ENCODE measurements at regions of chr12 and their contacts with region 1.

Region 1: GRCh38 chr12:7092229-7092985 is at the start of gene C1R:
- DNase-seq: peak; percentile 69 to 72
- ATAC-seq: peak; percentile 52 to 80
- H3K4me3 ChIP-seq: peak within 1 kb of the TSS; percentile 37
- H3K27ac ChIP-seq: peak within 1 kb of the TSS; percentile 85 to 91
- H3K4me1 ChIP-seq: peaks cover 20% of the 10 kb centered on the region; the same call in 2 of the 3 replicates
- CTCF ChIP-seq: peak; percentile 92
- EP300 ChIP-seq: no peak
- POLR2A ChIP-seq: no peak
- RAD21 ChIP-seq: peak; percentile 88 to 92
- polyA plus RNA-seq, gene C1R: 36.0 and 57.8 TPM in 2 replicates

Region 2: GRCh38 chr12:7060353-7060954 is 32.0 kb before region 1 on chr12 and contains the start of gene C1S:
- CTCF ChIA-PET with region 1: interaction called, 197 read pairs
- POLR2A ChIA-PET with region 1: interaction called, 19 read pairs
- DNase-seq: peak; percentile 93 to 95
- ATAC-seq: peak; percentile 99
- H3K4me3 ChIP-seq: peak within 1 kb of the TSS; percentile 15; the same call in 1 of the 3 replicates
- H3K27ac ChIP-seq: peak within 1 kb of the TSS; percentile 77 to 93
- H3K4me1 ChIP-seq: peaks cover 22% of the 10 kb centered on the region
- CTCF ChIP-seq: peak; percentile 96
- EP300 ChIP-seq: no peak
- POLR2A ChIP-seq: peak; percentile 30; the same call in 1 of the 2 replicates
- RAD21 ChIP-seq: peak; percentile 98 to 99
- polyA plus RNA-seq, gene C1S: 107 and 109 TPM in 2 replicates

Region 3: GRCh38 chr12:7068240-7068993 is 24.0 kb before region 1 on chr12:
- CTCF ChIA-PET with region 1: interaction called, 10 read pairs
- POLR2A ChIA-PET with region 1: interaction called, 3 read pairs
- DNase-seq: no peak
- ATAC-seq: peak in 1 of 2 experiments; percentile 20; a peak in 2 of 6 replicates
- H3K4me3 ChIP-seq: no peak overlapping the region
- H3K27ac ChIP-seq: no peak overlapping the region
- H3K4me1 ChIP-seq: no peaks in the 10 kb centered on the region
- CTCF ChIP-seq: no peak
- EP300 ChIP-seq: no peak
- POLR2A ChIP-seq: no peak
- RAD21 ChIP-seq: no peak

Region 4: DNA sequence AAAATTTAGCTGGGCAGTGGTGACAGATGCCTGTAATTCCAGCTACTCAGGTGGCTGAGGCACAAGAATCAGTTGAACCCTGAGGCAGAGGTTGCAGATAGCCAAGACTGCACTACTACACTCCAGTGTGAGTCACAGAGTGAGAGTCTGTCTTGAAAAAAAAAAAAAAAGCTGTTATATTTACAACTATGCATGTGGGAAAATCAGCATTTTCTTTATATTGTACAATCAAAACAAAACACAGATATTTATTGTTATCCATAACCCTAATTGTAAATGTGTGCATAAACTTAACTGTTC is 12.6 kb before region 1 on chr12:
- CTCF ChIA-PET with region 1: interaction called, 74 read pairs
- POLR2A ChIA-PET with region 1: interaction called, 9 read pairs
- DNase-seq: peak in 1 of 2 experiments; percentile 52
- ATAC-seq: peak; percentile 79 to 84
- H3K4me3 ChIP-seq: no peak overlapping the region
- H3K27ac ChIP-seq: peak overlapping the region; percentile 91
- H3K4me1 ChIP-seq: peaks cover 26% of the 10 kb centered on the region
- CTCF ChIP-seq: no peak
- EP300 ChIP-seq: no peak
- POLR2A ChIP-seq: no peak
- RAD21 ChIP-seq: no peak